Tibial artery (tissue), 4 donors: ENCODE measurements at regions of chr1 and their contacts with region 1.

Region 1: GRCh38 chr1:18714404-18715175 is 83.9 kb downstream of the PAX7 start:
- DNase-seq: no peak
- H3K4me3 ChIP-seq: no peak overlapping the region
- H3K27ac ChIP-seq: no peak overlapping the region
- H3K4me1 ChIP-seq: peaks cover 0 to 9% (median 4%) of the 10 kb centered on the region in 4 donors
- H3K27me3 ChIP-seq: peaks cover 0 to 85% of the 10 kb centered on the region in 2 donors
- CTCF ChIP-seq: no peak

Region 2: DNA sequence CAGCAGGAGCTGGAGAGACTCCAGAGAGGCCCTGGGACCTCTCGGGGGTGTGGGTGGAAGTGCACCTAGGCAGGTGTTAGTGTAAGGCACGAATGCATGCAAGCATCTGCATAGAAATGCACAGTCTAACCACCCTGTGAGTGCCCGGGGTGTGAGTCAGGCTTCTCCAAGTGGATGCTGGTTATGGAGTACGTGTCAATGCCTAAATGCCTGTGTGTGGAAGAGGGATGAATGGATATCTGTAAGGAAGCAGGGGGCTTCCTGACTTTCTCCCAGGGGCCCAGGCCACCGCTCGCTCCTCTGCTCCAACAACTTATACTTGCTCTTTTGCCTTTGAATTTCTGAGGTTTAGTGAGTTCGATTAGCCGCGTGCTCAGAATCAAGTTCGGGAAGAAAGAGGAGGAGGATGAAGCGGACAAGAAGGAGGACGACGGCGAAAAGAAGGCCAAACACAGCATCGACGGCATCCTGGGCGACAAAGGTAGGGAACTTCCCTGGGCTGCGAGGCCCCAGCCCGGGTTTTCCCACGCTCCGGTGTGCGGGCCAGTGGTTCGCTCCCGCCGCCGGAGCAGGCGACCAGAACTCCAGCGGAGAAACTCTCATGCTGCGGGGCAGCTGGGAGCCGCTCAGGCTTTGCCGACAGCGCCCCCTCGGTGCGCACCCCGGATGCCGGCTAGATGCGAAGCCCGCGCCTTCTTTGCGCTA is 78.5 kb before region 1 on chr1:
- intact Hi-C with region 1: no loop called
- DNase-seq: no peak
- H3K4me3 ChIP-seq: no peak overlapping the region
- H3K27ac ChIP-seq: no peak overlapping the region
- H3K4me1 ChIP-seq: peaks cover 0 to 13% (median 9%) of the 10 kb centered on the region in 4 donors
- H3K27me3 ChIP-seq: peaks cover 0 to 100% of the 10 kb centered on the region in 2 donors
- CTCF ChIP-seq: no peak

Region 3: GRCh38 chr1:18661404-18662284 is 52.9 kb before region 1 on chr1:
- intact Hi-C with region 1: loop called (anchors 2 kb)
- DNase-seq: no peak
- H3K4me3 ChIP-seq: no peak overlapping the region
- H3K27ac ChIP-seq: no peak overlapping the region
- H3K4me1 ChIP-seq: no peaks in the 10 kb centered on the region
- H3K27me3 ChIP-seq: peaks cover 0 to 93% of the 10 kb centered on the region in 2 donors
- CTCF ChIP-seq: no peak